ENCODE measurements at regions of chr9 and their contacts with region 1.

Region 1: GRCh38 chr9:37753489-37754190 is at the start of gene TRMT10B:
- DNase-seq: peak; percentile 32 to 85 (median 69)
- ATAC-seq: peak; percentile 95
- H3K4me3 ChIP-seq: peak within 1 kb of the TSS; percentile 88 to 98
- H3K4me3 Mint-ChIP-seq: peak within 1 kb of the TSS; percentile 97
- H3K27ac ChIP-seq: peak within 1 kb of the TSS; percentile 74 to 92
- H3K27ac Mint-ChIP-seq: peak within 1 kb of the TSS; percentile 95
- H3K4me1 ChIP-seq: peaks cover 13% of the 10 kb centered on the region
- H3K4me1 Mint-ChIP-seq: peaks cover 35% of the 10 kb centered on the region
- H3K27me3 ChIP-seq: no peaks in the 10 kb centered on the region
- H3K27me3 Mint-ChIP-seq: no peaks in the 10 kb centered on the region
- CTCF ChIP-seq: no peak
- total RNA-seq, gene TRMT10B: 5.9 to 7.0 TPM

Region 2: DNA sequence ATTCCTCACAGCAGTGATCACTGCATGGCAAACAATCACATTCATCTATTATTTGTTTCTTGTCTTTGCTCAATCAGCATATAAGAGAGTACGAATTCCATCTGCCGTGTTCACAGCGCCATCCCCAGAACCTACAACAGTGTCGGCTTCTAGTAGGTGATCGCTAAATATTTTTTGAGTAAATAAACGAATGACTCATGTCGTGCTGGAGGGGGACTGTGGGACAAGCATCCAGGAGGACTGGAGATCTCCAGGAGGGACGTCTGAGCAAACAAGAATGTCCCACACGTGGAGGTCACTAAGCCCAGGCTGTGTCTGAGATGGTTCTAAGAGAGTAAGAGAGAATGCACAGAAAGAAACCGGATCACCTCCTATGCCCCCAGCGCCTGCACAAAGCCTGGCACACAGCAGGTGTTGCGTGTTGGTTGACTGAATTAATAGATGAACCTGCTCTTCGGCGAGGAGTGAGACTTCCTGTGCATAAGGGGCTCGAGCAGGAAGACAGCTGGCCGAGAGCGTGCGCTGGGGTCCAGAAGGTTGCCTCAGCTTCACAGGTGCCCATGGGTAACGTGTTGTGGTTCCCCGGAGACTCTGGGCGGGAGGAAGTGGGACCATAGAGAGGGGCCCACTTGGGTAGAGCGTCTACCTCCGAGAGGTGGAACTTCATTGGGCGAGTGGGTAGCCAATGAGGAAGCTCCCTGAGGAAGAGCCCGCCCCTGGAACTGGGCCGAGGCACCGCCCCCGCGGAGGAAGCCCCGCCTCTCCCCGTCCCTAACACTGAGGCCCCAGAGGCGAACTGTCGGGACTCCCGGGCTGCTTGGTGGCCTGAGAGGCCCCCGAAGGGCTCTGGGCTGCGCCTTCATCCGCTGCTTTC is 987.9 kb before region 1 on chr9:
- CTCF ChIA-PET with region 1: no interaction called
- POLR2A ChIA-PET with region 1: no interaction called
- intact Hi-C with region 1: loop called in 1 of 2 experiments (anchors 10 kb)
- DNase-seq: peak; percentile 68 to 95 (median 89)
- ATAC-seq: peak; percentile 99
- H3K4me3 ChIP-seq: peak overlapping the region; percentile 47 to 54
- H3K4me3 Mint-ChIP-seq: no peak overlapping the region
- H3K27ac ChIP-seq: peak overlapping the region; percentile 23 to 39
- H3K27ac Mint-ChIP-seq: peak overlapping the region; percentile 71
- H3K4me1 ChIP-seq: peaks cover 6% of the 10 kb centered on the region
- H3K4me1 Mint-ChIP-seq: peaks cover 6% of the 10 kb centered on the region
- H3K27me3 ChIP-seq: peaks cover 0 to 7% of the 10 kb centered on the region in 2 experiments
- H3K27me3 Mint-ChIP-seq: peaks cover 5% of the 10 kb centered on the region
- CTCF ChIP-seq: no peak

Region 3: GRCh38 chr9:37141015-37141414 is 612.6 kb before region 1 on chr9:
- CTCF ChIA-PET with region 1: no interaction called
- POLR2A ChIA-PET with region 1: no interaction called
- intact Hi-C with region 1: no loop called
- DNase-seq: no peak
- ATAC-seq: no peak
- H3K4me3 ChIP-seq: no peak overlapping the region
- H3K4me3 Mint-ChIP-seq: no peak overlapping the region
- H3K27ac ChIP-seq: no peak overlapping the region
- H3K27ac Mint-ChIP-seq: no peak overlapping the region
- H3K4me1 ChIP-seq: peaks cover 36% of the 10 kb centered on the region
- H3K4me1 Mint-ChIP-seq: peaks cover 68% of the 10 kb centered on the region
- H3K27me3 ChIP-seq: no peaks in the 10 kb centered on the region
- H3K27me3 Mint-ChIP-seq: no peaks in the 10 kb centered on the region
- CTCF ChIP-seq: no peak

Region 4: DNA sequence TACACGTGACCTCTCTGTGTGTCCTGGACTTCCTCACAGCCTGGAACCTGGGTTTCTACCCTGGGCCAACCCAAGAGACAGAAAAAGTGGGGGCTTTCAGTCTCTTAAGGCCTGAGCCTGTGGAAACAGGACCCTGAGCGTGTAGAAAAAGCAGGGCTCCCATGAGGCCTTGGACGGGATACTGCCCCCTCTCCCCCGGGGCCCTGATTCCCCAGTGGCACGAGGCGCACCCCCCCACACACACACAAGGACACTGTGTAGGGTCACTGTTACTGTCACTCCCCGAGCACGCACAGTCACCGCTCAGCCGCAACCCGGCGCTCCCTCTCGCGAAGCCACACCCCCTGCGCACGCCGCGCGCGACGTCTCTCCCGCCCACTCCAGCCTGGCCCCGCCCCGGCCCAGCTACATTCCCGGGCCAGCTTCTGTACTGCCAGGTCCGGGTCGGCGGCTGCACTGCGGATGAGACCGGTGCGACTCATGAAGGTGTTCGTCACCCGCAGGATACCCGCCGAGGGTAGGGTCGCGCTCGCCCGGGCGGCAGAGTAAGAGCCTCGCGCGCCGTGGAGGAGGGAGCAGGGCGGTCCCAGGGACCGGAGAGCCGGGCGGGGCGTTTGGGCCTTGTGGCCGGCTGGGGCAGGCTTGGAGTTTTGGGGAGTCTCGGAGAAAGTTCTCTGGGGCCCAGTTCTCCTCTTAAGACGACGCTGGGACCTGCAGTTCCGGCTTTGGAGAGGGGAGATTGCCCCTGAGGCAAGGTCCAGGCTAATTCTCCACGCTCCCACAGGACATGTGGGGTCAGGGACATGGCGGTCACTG is 331.1 kb before region 1 on chr9 and contains the start of gene GRHPR:
- CTCF ChIA-PET with region 1: no interaction called
- POLR2A ChIA-PET with region 1: no interaction called
- intact Hi-C with region 1: loop called in 1 of 2 experiments (anchors 10 kb)
- DNase-seq: peak; percentile 73 to 94 (median 88)
- ATAC-seq: peak; percentile 98
- H3K4me3 ChIP-seq: peak within 1 kb of the TSS; percentile 90 to 96
- H3K4me3 Mint-ChIP-seq: peak within 1 kb of the TSS; percentile 96
- H3K27ac ChIP-seq: peak within 1 kb of the TSS; percentile 76 to 82
- H3K27ac Mint-ChIP-seq: peak within 1 kb of the TSS; percentile 93
- H3K4me1 ChIP-seq: peaks cover 20% of the 10 kb centered on the region
- H3K4me1 Mint-ChIP-seq: peaks cover 28% of the 10 kb centered on the region
- H3K27me3 ChIP-seq: no peaks in the 10 kb centered on the region
- H3K27me3 Mint-ChIP-seq: no peaks in the 10 kb centered on the region
- CTCF ChIP-seq: no peak
- total RNA-seq, gene GRHPR: 25.5 to 25.8 TPM

Region 5: GRCh38 chr9:37465249-37466036 is 288.2 kb before region 1 on chr9 and contains the start of gene ZBTB5:
- CTCF ChIA-PET with region 1: no interaction called
- POLR2A ChIA-PET with region 1: interaction called, 3 read pairs
- intact Hi-C with region 1: loop called in 1 of 2 experiments (anchors 5 kb)
- DNase-seq: peak; percentile 97 to 100 (median 99)
- ATAC-seq: peak; percentile 79
- H3K4me3 ChIP-seq: peak within 1 kb of the TSS; percentile 91 to 97
- H3K4me3 Mint-ChIP-seq: peak within 1 kb of the TSS; percentile 95
- H3K27ac ChIP-seq: peak within 1 kb of the TSS; percentile 86 to 97
- H3K27ac Mint-ChIP-seq: peak within 1 kb of the TSS; percentile 98
- H3K4me1 ChIP-seq: peaks cover 23% of the 10 kb centered on the region
- H3K4me1 Mint-ChIP-seq: peaks cover 40% of the 10 kb centered on the region
- H3K27me3 ChIP-seq: no peaks in the 10 kb centered on the region
- H3K27me3 Mint-ChIP-seq: no peaks in the 10 kb centered on the region
- CTCF ChIP-seq: no peak
- total RNA-seq, gene ZBTB5: 18.5 to 18.7 TPM

Region 6: DNA sequence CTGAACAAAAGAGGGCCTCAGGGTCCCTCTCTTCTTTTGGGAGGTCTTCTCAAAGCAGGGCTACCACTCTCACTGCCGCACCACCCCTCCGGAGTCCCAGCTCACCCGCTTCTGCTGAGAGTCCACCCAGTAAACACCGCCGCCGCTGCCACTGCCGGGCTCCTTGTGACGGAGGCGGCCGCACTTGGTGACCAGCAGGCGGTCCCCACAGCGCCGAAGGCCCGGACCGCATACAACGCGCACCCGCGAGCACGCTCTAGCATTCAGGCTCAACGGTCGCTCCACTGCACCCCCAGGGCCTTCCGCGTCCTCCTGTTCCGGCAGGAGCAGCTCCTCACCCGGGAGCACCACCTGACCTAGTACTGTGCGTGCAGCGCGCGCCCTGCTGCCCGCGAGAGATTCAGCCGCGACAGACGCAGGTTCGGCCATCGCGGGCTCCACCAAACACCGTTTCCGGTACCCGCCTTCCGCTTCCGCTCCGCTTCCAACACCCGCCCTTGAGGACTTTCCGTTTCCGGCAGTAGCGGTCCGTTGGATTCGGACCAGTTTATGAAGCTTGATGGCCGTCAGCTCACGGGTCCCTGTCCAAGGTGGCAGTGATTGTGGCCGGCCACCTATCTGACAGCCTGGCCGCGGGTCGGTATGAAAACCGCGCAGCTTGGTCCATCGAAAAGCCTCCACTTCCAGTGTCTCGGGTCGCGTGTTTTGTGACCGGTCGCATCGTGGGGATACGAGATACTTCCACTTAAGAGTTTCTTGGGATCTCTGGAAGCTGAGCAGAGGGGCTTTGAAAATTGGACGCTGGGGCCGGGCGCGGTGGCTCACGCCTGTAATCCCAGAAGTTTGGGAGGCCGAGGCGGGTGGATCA is 31.2 kb after region 1 on chr9 and contains the start of gene EXOSC3:
- CTCF ChIA-PET with region 1: no interaction called
- POLR2A ChIA-PET with region 1: interaction called, 3 read pairs
- intact Hi-C with region 1: loop called (anchors 1 kb)
- DNase-seq: peak; percentile 58 to 92 (median 84)
- ATAC-seq: peak; percentile 83
- H3K4me3 ChIP-seq: peak within 1 kb of the TSS; percentile 98
- H3K4me3 Mint-ChIP-seq: peak within 1 kb of the TSS; percentile 97
- H3K27ac ChIP-seq: peak within 1 kb of the TSS; percentile 75 to 88
- H3K27ac Mint-ChIP-seq: peak within 1 kb of the TSS; percentile 96
- H3K4me1 ChIP-seq: peaks cover 24% of the 10 kb centered on the region
- H3K4me1 Mint-ChIP-seq: peaks cover 42% of the 10 kb centered on the region
- H3K27me3 ChIP-seq: no peaks in the 10 kb centered on the region
- H3K27me3 Mint-ChIP-seq: peaks cover 4% of the 10 kb centered on the region
- CTCF ChIP-seq: no peak
- total RNA-seq, gene EXOSC3: 34.2 to 45.9 TPM

Region 7: DNA sequence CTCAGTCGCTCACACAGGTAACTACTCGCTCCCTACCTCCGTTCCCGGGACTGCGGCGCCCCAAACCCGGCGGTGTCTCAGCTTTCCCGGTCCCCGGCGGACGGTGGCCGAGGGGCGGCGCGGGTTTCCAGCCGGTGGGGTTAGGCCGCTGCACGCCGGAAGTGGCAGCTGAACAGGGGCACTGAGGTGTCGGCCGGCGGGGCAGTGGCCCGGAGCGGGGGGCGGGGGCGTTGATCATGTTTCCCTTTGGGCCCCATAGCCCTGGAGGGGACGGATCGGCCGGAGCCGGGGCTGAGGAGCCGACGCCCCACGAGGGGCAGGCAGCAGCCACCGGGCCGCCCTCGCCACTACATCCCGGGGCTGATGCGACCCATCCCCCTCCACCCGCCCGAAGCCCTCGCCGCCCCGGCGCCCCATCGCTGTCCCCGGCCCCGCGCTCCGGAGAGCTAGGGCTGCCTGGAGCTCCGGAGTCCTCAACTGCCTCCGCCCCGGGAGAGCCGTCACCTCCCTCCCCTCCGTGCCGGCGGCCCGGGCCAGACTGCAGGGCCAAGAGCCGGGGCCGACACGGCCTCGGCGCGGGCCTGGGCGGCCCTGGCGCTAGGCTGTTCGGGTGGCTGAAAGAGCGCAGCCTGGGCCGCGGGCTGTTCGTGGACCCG is 47.1 kb after region 1 on chr9 and contains the start of gene DCAF10:
- CTCF ChIA-PET with region 1: no interaction called
- POLR2A ChIA-PET with region 1: no interaction called
- intact Hi-C with region 1: loop called (anchors 1 to 5 kb)
- DNase-seq: peak; percentile 81 to 95 (median 88)
- ATAC-seq: peak; percentile 86
- H3K4me3 ChIP-seq: peak within 1 kb of the TSS; percentile 83 to 97
- H3K4me3 Mint-ChIP-seq: peak within 1 kb of the TSS; percentile 94
- H3K27ac ChIP-seq: peak within 1 kb of the TSS; percentile 69 to 77
- H3K27ac Mint-ChIP-seq: peak within 1 kb of the TSS; percentile 86
- H3K4me1 ChIP-seq: peaks cover 27% of the 10 kb centered on the region
- H3K4me1 Mint-ChIP-seq: peaks cover 40% of the 10 kb centered on the region
- H3K27me3 ChIP-seq: no peaks in the 10 kb centered on the region
- H3K27me3 Mint-ChIP-seq: no peaks in the 10 kb centered on the region
- CTCF ChIP-seq: no peak
- total RNA-seq, gene DCAF10: 4.9 to 5.6 TPM

Region 8: DNA sequence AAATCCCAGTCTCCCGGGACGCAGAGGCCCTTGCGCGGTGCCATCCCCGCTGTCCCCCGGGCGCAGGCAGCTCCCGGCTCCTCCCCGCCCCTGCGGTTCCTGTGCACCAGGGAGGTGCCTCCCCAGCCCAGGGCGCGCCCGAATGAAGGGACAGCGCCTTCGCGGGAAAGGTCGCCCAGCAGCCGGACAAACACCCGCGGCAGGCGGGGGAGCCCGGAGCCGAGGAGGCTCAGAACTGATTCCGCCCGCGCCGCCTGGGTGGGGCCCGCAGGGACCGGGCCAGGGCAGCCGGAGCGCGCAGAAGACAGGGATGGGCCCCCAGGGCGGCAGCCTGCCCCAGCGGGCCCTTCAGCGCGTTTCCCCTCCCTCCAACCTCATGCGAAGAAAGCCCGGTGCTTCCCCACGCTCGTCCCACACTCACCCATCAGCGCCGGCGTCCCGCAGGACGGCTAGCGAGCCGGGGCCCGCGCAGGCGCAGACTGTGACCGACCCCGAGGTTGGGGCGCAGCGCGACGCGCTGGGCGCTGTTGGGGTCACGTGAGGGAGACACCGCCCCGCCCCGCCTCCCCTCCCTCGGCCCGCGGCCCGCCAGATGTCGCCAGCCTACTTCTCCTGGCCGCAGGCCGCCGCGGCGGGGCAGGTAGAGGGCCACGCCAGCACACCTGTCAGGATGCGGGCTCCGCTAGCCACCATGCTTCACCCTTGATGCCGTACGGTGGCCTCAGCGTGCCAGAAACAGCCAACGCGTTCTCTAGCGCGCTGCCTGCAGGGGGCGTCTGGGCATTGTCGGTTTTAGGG is 150.2 kb after region 1 on chr9 and contains the start of gene SLC25A51:
- CTCF ChIA-PET with region 1: no interaction called
- POLR2A ChIA-PET with region 1: no interaction called
- intact Hi-C with region 1: loop called (anchors 1 to 2 kb)
- DNase-seq: peak; percentile 94 to 99 (median 96)
- ATAC-seq: peak; percentile 87
- H3K4me3 ChIP-seq: peak within 1 kb of the TSS; percentile 65 to 89
- H3K4me3 Mint-ChIP-seq: peak within 1 kb of the TSS; percentile 91
- H3K27ac ChIP-seq: peak within 1 kb of the TSS; percentile 62 to 73
- H3K27ac Mint-ChIP-seq: peak within 1 kb of the TSS; percentile 94
- H3K4me1 ChIP-seq: peaks cover 22% of the 10 kb centered on the region
- H3K4me1 Mint-ChIP-seq: peaks cover 30% of the 10 kb centered on the region
- H3K27me3 ChIP-seq: no peaks in the 10 kb centered on the region
- H3K27me3 Mint-ChIP-seq: no peaks in the 10 kb centered on the region
- CTCF ChIP-seq: peak; percentile 86
- total RNA-seq, gene SLC25A51: 14.7 to 15.2 TPM